HEK293 (cell line): ENCODE measurements at regions of chr2 and their contacts with region 1.

Region 1: GRCh38 chr2:238847841-238848690 is at the start of gene TWIST2:
- H3K4me3 ChIP-seq: peak within 1 kb of the TSS; percentile 58
- H3K27ac ChIP-seq: peak within 1 kb of the TSS; percentile 74; the same call in 1 of the 2 replicates
- H3K4me1 ChIP-seq: peaks cover 12% of the 10 kb centered on the region
- CTCF ChIP-seq: peak; percentile 77

Region 2: DNA sequence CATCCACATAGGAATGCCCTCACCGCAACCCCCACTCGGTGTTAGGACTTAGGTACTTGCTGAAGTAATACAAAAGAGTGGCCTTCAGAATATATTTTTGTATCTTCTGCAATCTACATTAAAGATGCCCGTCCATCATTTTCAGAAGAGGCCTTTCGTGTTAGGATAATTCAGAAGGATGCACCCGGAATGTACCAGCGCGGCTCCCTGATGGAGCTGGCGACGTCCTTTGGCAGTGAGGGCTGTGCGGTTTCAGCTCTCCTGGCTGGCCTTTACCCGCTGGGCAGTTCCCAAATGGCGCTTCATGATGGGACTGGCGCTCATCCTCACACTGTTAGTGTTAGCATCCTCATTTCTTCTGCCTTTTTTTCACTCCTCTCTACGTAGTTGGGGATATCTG is 15.2 kb after region 1 on chr2:
- CTCF ChIA-PET with region 1: no interaction called
- POLR2A ChIA-PET with region 1: interaction called, 11 read pairs
- H3K4me3 ChIP-seq: no peak overlapping the region
- H3K27ac ChIP-seq: no peak overlapping the region
- H3K4me1 ChIP-seq: peaks cover 11% of the 10 kb centered on the region
- CTCF ChIP-seq: no peak